ENCODE measurements at regions of chr12 and their contacts with region 1.

Region 1: GRCh38 chr12:58919231-58920101 is 838 bp downstream of the LRIG3 start:
- DNase-seq: peak; percentile 36 to 75
- H3K4me3 ChIP-seq: peak overlapping the region; percentile 91 to 96
- H3K27ac ChIP-seq: peak overlapping the region; percentile 97 to 98
- H3K4me1 ChIP-seq: peaks cover 0 to 33% (median 9%) of the 10 kb centered on the region in 4 donors
- H3K27me3 ChIP-seq: no peaks in the 10 kb centered on the region
- CTCF ChIP-seq: no peak

Region 2: GRCh38 chr12:58540480-58541299 is 378.8 kb before region 1 on chr12:
- intact Hi-C with region 1: loop called (anchors 5 kb)
- DNase-seq: peak; percentile 67 to 81
- H3K4me3 ChIP-seq: no peak overlapping the region
- H3K27ac ChIP-seq: peak overlapping the region; percentile 35 to 41
- H3K4me1 ChIP-seq: peaks cover 0 to 37% (median 13%) of the 10 kb centered on the region in 4 donors
- H3K27me3 ChIP-seq: no peaks in the 10 kb centered on the region
- CTCF ChIP-seq: peak; percentile 77 to 90

Region 3: DNA sequence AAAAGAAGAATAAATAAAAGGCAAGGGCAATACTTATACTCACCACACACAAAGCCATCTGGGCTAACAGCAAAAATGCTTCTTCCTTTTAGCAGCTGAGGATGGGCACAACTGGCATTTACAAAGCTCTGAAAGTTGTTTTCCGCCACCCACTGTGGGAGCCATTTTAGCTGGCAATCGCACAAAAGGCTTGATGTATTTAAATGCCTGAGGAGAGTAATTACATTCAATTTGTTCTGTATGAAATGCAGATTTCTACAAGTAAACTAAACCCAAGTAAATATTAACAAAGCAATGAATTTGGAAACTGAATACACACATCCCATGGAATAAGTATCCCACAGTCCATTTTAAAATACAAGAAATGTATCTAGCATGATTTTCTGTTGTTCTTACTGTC is 36.6 kb before region 1 on chr12:
- intact Hi-C with region 1: loop called (anchors 5 kb)
- DNase-seq: no peak
- H3K4me3 ChIP-seq: no peak overlapping the region
- H3K27ac ChIP-seq: peak overlapping the region; percentile 51 to 58
- H3K4me1 ChIP-seq: peaks cover 0 to 55% (median 29%) of the 10 kb centered on the region in 4 donors
- H3K27me3 ChIP-seq: no peaks in the 10 kb centered on the region
- CTCF ChIP-seq: no peak

Region 4: DNA sequence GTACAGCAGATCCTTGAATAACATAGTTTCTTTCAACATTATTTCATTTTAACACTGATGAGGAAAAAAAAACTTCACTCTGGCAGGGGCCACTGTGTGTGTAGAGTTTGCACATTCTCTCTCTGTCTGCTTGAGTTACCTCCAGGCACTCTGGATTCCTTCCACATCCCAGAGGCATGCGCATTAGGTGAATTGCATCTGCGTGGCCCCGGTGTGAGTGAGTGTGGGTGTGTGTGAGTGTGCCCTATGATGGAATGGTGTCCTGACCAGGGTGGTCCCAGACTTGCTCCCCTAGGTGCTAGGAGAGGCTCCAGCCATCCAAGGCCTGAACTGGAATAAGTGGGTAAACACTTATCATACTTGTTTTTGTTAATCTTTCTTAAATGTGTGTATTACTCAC is 91.5 kb after region 1 on chr12:
- intact Hi-C with region 1: no loop called
- DNase-seq: no peak
- H3K4me3 ChIP-seq: no peak overlapping the region
- H3K27ac ChIP-seq: no peak overlapping the region
- H3K4me1 ChIP-seq: peaks cover 0 to 9% (median 0%) of the 10 kb centered on the region in 4 donors
- H3K27me3 ChIP-seq: no peaks in the 10 kb centered on the region
- CTCF ChIP-seq: no peak